ENCODE measurements at regions of chr1 and their contacts with region 1.

Region 1: GRCh38 chr1:109292364-109292763 is 9.4 kb upstream of the PSRC1 start:
- DNase-seq: no peak
- H3K4me3 ChIP-seq: no peak overlapping the region
- H3K27ac ChIP-seq: no peak overlapping the region
- H3K4me1 ChIP-seq: no peaks in the 10 kb centered on the region
- H3K27me3 ChIP-seq: no peaks in the 10 kb centered on the region; a peak in 1 of 7 replicates
- CTCF ChIP-seq: no peak
- EP300 ChIP-seq: no peak
- POLR2A ChIP-seq: no peak
- RAD21 ChIP-seq: no peak

Region 2: GRCh38 chr1:109137964-109138741 is 154.2 kb before region 1 on chr1:
- CTCF ChIA-PET with region 1: no interaction called
- POLR2A ChIA-PET with region 1: no interaction called
- DNase-seq: no peak
- H3K4me3 ChIP-seq: no peak overlapping the region
- H3K27ac ChIP-seq: no peak overlapping the region
- H3K4me1 ChIP-seq: no peaks in the 10 kb centered on the region
- H3K27me3 ChIP-seq: no peaks in the 10 kb centered on the region
- CTCF ChIP-seq: no peak
- EP300 ChIP-seq: no peak
- POLR2A ChIP-seq: no peak
- RAD21 ChIP-seq: no peak

Region 3: GRCh38 chr1:109240096-109240585 is 52.2 kb before region 1 on chr1:
- CTCF ChIA-PET with region 1: no interaction called
- POLR2A ChIA-PET with region 1: no interaction called
- DNase-seq: no peak
- H3K4me3 ChIP-seq: no peak overlapping the region
- H3K27ac ChIP-seq: peak overlapping the region; percentile 13; the same call in 1 of the 2 replicates
- H3K4me1 ChIP-seq: peaks cover 21 to 44% (median 31%) of the 10 kb centered on the region in 4 experiments
- H3K27me3 ChIP-seq: no peaks in the 10 kb centered on the region
- CTCF ChIP-seq: no peak
- EP300 ChIP-seq: no peak
- POLR2A ChIP-seq: 0 out of 3 replicates have a peak, but pooled peaks of 1 of the 2 experiments have one; percentile 12
- RAD21 ChIP-seq: no peak

Region 4: GRCh38 chr1:109314795-109315194 is 22.4 kb after region 1 on chr1:
- CTCF ChIA-PET with region 1: interaction called, 34 read pairs
- POLR2A ChIA-PET with region 1: interaction called, 3 read pairs
- DNase-seq: no peak
- H3K4me3 ChIP-seq: no peak overlapping the region
- H3K27ac ChIP-seq: no peak overlapping the region
- H3K4me1 ChIP-seq: no peaks in the 10 kb centered on the region; a peak in 1 of 7 replicates
- H3K27me3 ChIP-seq: no peaks in the 10 kb centered on the region
- CTCF ChIP-seq: no peak
- EP300 ChIP-seq: no peak
- POLR2A ChIP-seq: no peak
- RAD21 ChIP-seq: no peak